ENCODE measurements at regions of chr6 and their contacts with region 1.

Region 1: GRCh38 chr6:107033126-107033525 is 5.1 kb downstream of the MTRES1 start:
- DNase-seq: no peak
- H3K4me3 ChIP-seq: no peak overlapping the region
- H3K27ac ChIP-seq: no peak overlapping the region
- H3K4me1 ChIP-seq: peaks cover 22 to 32% (median 26%) of the 10 kb centered on the region in 4 donors
- H3K27me3 ChIP-seq: no peaks in the 10 kb centered on the region
- CTCF ChIP-seq: no peak
- EP300 ChIP-seq: no peak
- POLR2A ChIP-seq: no peak

Region 2: DNA sequence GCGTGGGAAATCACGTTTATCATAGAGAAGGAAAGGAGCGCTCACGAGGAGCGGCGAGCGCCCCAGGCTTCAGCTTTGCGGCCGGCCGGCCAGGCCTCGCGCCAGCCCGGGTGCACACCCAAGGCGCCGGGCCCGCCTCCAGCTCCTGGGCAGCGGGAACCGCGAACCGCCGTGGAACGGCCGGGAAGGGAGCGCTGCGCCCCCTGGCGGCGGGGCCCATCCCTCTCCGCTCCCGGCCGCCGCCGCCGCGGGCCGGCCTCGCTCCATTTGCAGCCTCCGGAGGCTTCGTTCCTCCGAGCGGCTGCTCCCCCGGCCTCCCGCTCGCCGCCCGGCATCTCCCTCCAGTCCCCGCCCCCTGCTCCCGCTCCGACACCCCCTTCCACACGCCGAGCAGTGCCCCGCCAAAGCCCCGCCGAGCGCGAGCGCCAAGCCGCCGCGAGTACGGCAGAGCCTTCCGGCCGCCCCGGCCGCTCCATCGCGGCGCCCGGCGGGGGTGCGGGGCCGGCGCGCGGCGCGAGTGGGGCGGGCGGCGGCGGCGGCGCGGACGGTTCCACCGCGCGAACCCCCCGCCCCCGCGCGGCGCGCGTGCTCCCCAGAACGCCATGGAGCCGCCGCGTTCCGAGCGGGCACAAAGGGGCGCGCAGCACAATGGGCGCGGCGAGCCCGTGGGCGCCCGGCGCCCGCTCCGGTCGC is 81.2 kb after region 1 on chr6:
- intact Hi-C with region 1: loop called (anchors 2 kb)
- DNase-seq: no peak
- H3K4me3 ChIP-seq: peak overlapping the region; percentile 64 to 90 (median 72)
- H3K27ac ChIP-seq: peak overlapping the region; percentile 61 to 79 (median 72)
- H3K4me1 ChIP-seq: peaks cover 15 to 25% (median 23%) of the 10 kb centered on the region in 4 donors
- H3K27me3 ChIP-seq: peaks cover 0 to 26% (median 0%) of the 10 kb centered on the region in 4 donors
- CTCF ChIP-seq: peak; percentile 80 to 96 (median 90)
- EP300 ChIP-seq: no peak
- POLR2A ChIP-seq: no peak

Region 3: GRCh38 chr6:107304421-107305025 is 271.4 kb after region 1 on chr6:
- intact Hi-C with region 1: no loop called
- DNase-seq: no peak
- H3K4me3 ChIP-seq: no peak overlapping the region
- H3K27ac ChIP-seq: no peak overlapping the region
- H3K4me1 ChIP-seq: no peaks in the 10 kb centered on the region
- H3K27me3 ChIP-seq: no peaks in the 10 kb centered on the region
- CTCF ChIP-seq: no peak
- EP300 ChIP-seq: no peak
- POLR2A ChIP-seq: no peak